MCF 10A (cell line): ENCODE measurements at regions of chr12 and their contacts with region 1.

Region 1: GRCh38 chr12:58443273-58443980 is 476.9 kb downstream of the LRIG3 start:
- DNase-seq: peak; percentile 58
- H3K4me3 Mint-ChIP-seq: no peak overlapping the region
- H3K27ac Mint-ChIP-seq: no peak overlapping the region
- H3K4me1 Mint-ChIP-seq: no peaks in the 10 kb centered on the region
- H3K27me3 Mint-ChIP-seq: no peaks in the 10 kb centered on the region
- CTCF ChIP-seq: peak; percentile 51

Region 2: GRCh38 chr12:58877242-58877743 is 433.9 kb after region 1 on chr12:
- CTCF ChIA-PET with region 1: no interaction called
- POLR2A ChIA-PET with region 1: no interaction called
- intact Hi-C with region 1: no loop called
- DNase-seq: peak; percentile 94
- H3K4me3 Mint-ChIP-seq: no peak overlapping the region
- H3K27ac Mint-ChIP-seq: peak overlapping the region; percentile 51
- H3K4me1 Mint-ChIP-seq: peaks cover 17% of the 10 kb centered on the region
- H3K27me3 Mint-ChIP-seq: no peaks in the 10 kb centered on the region
- CTCF ChIP-seq: no peak

Region 3: GRCh38 chr12:59087077-59087673 is 643.7 kb after region 1 on chr12:
- CTCF ChIA-PET with region 1: no interaction called
- POLR2A ChIA-PET with region 1: no interaction called
- intact Hi-C with region 1: loop called (anchors 10 kb)
- DNase-seq: peak; percentile 37
- H3K4me3 Mint-ChIP-seq: no peak overlapping the region
- H3K27ac Mint-ChIP-seq: no peak overlapping the region
- H3K4me1 Mint-ChIP-seq: peaks cover 33% of the 10 kb centered on the region
- H3K27me3 Mint-ChIP-seq: no peaks in the 10 kb centered on the region
- CTCF ChIP-seq: peak; percentile 79